CD8-positive, alpha-beta T cell (primary cell): ENCODE measurements at regions of chr2 and their contacts with region 1.

Region 1: GRCh38 chr2:30336978-30337841 is 105.9 kb downstream of the LBH start:
- DNase-seq: peak in 8 of 9 experiments; percentile 30 to 84 (median 60)
- ATAC-seq: peak; percentile 80
- H3K4me3 ChIP-seq: peak overlapping the region; percentile 31 to 43
- H3K4me3 Mint-ChIP-seq: peak overlapping the region; percentile 80
- H3K27ac ChIP-seq: peak overlapping the region; percentile 65 to 89
- H3K27ac Mint-ChIP-seq: peak overlapping the region; percentile 98
- H3K4me1 ChIP-seq: peaks cover 68% of the 10 kb centered on the region
- H3K4me1 Mint-ChIP-seq: peaks cover 82% of the 10 kb centered on the region
- H3K27me3 ChIP-seq: no peaks in the 10 kb centered on the region
- H3K27me3 Mint-ChIP-seq: no peaks in the 10 kb centered on the region
- CTCF ChIP-seq: no peak

Region 2: DNA sequence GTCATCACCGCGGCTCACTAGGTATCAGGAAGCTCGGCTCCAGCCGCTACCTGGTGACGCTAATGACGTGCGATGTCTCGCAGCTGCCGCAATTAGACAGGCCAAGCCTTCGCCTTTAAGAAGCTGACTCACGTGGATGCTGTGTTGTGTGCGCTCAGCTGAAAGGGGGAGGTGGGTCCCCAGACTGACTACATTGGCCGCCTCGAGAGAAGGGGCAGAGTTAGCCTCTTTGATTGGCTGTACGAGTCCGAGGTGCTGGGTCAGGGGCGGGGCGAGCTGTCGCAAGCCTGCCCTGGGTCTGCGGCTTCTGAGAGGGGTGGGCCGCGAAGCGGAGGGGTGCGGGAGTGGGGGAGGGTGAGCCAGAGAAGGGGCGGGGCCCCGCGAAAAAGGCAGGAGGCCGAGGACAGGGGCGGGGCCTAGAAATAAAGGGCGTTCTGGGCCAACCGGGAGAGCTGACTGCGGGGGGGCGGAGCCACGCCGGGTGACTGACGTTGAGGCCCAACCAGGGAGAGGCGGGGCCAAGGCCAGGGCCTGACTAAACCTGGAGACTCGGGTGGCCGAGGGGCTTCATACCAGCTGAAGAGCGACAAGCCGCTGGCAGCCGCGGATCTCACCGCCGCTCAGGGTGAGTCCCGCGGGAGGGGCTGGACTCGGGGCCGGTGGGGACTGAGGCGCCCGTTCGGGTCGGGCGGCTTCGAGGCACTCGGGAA is 190.6 kb before region 1 on chr2 and contains the start of gene YPEL5:
- CTCF ChIA-PET with region 1: no interaction called
- POLR2A ChIA-PET with region 1: interaction called, 8 read pairs
- intact Hi-C with region 1: loop called in 1 of 2 experiments (anchors 5 kb)
- DNase-seq: peak; percentile 99 to 100 (median 100)
- ATAC-seq: peak; percentile 82
- H3K4me3 ChIP-seq: peak within 1 kb of the TSS; percentile 75 to 76
- H3K4me3 Mint-ChIP-seq: peak within 1 kb of the TSS; percentile 89
- H3K27ac ChIP-seq: peak within 1 kb of the TSS; percentile 97 to 100
- H3K27ac Mint-ChIP-seq: peak within 1 kb of the TSS; percentile 100
- H3K4me1 ChIP-seq: peaks cover 50% of the 10 kb centered on the region
- H3K4me1 Mint-ChIP-seq: peaks cover 60% of the 10 kb centered on the region
- H3K27me3 ChIP-seq: no peaks in the 10 kb centered on the region
- H3K27me3 Mint-ChIP-seq: no peaks in the 10 kb centered on the region
- CTCF ChIP-seq: no peak
- total RNA-seq, gene YPEL5: 1,051 to 1,071 TPM

Region 3: GRCh38 chr2:30231212-30231995 is 105.8 kb before region 1 on chr2 and contains the start of gene LBH:
- CTCF ChIA-PET with region 1: interaction called, 52 read pairs
- POLR2A ChIA-PET with region 1: interaction called, 60 read pairs
- intact Hi-C with region 1: loop called in 1 of 2 experiments (anchors 2 kb)
- DNase-seq: peak; percentile 82 to 97 (median 89)
- ATAC-seq: peak; percentile 48
- H3K4me3 ChIP-seq: peak within 1 kb of the TSS; percentile 89 to 96
- H3K4me3 Mint-ChIP-seq: peak within 1 kb of the TSS; percentile 94
- H3K27ac ChIP-seq: peak within 1 kb of the TSS; percentile 92 to 99
- H3K27ac Mint-ChIP-seq: peak within 1 kb of the TSS; percentile 96
- H3K4me1 ChIP-seq: peaks cover 52% of the 10 kb centered on the region
- H3K4me1 Mint-ChIP-seq: peaks cover 64% of the 10 kb centered on the region
- H3K27me3 ChIP-seq: no peaks in the 10 kb centered on the region
- H3K27me3 Mint-ChIP-seq: no peaks in the 10 kb centered on the region
- CTCF ChIP-seq: no peak
- total RNA-seq, gene LBH: 127 to 133 TPM

Region 4: DNA sequence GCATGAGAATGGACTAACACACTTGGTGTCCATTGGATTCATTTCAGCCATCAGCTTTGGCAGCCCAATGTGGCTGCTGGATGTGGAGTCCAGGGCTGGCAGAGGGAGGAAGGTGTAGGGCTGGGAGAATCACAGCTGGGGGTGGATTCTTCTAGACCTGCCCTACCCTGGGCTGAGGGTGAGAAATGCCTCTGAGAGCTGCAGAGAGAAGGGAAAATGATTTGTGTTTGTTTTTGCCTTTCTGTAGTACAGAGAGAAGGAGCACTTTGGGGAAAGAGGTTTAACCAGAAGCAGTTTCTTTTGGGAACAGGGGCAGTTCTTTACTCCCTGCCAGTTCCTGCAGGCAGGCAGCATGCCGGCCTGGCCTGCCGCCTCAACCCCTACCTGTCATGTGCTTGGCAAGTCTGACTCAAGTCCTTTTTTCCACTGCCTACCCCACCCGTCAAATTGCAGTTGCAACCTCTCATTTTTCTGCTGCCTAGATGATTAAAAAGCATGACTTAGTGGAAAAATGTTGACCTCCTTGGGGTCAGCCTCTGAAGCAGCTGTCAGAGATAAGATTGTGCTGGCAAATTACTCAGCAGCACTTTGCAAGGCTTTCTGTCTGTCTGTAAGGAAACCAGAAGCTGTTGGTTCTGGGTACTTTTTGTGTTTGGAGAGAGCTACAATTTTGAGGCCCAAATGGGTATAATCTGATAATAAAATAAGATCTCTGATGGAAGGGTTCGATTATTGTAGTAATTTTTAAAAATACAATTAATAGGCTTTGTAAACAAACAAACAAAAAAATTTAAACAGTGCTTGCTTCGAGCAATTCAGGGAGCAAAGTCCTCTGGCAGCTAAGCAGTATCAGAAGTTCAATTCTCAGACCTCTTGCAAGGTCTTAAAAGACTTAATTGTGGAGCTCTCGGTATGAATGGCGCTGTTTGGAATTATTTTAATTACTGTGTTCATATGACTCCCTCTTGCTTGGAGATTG is 84.2 kb before region 1 on chr2:
- CTCF ChIA-PET with region 1: interaction called, 11 read pairs
- POLR2A ChIA-PET with region 1: interaction called, 6 read pairs
- intact Hi-C with region 1: no loop called
- DNase-seq: peak in 7 of 9 experiments; percentile 36 to 64 (median 55)
- ATAC-seq: peak; percentile 37
- H3K4me3 ChIP-seq: peak overlapping the region in 1 of 2 experiments; percentile 17
- H3K4me3 Mint-ChIP-seq: peak overlapping the region; percentile 46
- H3K27ac ChIP-seq: peak overlapping the region; percentile 28 to 68
- H3K27ac Mint-ChIP-seq: peak overlapping the region; percentile 98
- H3K4me1 ChIP-seq: peaks cover 97% of the 10 kb centered on the region
- H3K4me1 Mint-ChIP-seq: peaks cover 96% of the 10 kb centered on the region
- H3K27me3 ChIP-seq: no peaks in the 10 kb centered on the region
- H3K27me3 Mint-ChIP-seq: no peaks in the 10 kb centered on the region
- CTCF ChIP-seq: no peak

Region 5: GRCh38 chr2:30310955-30311354 is 26.3 kb before region 1 on chr2:
- CTCF ChIA-PET with region 1: interaction called, 3 read pairs
- POLR2A ChIA-PET with region 1: interaction called, 6 read pairs
- intact Hi-C with region 1: loop called in 1 of 2 experiments (anchors 2 kb)
- DNase-seq: peak in 1 of 9 experiments; percentile 30
- ATAC-seq: peak; percentile 25
- H3K4me3 ChIP-seq: no peak overlapping the region
- H3K4me3 Mint-ChIP-seq: peak overlapping the region; percentile 9
- H3K27ac ChIP-seq: no peak overlapping the region
- H3K27ac Mint-ChIP-seq: peak overlapping the region; percentile 67
- H3K4me1 ChIP-seq: peaks cover 35% of the 10 kb centered on the region
- H3K4me1 Mint-ChIP-seq: peaks cover 47% of the 10 kb centered on the region
- H3K27me3 ChIP-seq: no peaks in the 10 kb centered on the region
- H3K27me3 Mint-ChIP-seq: no peaks in the 10 kb centered on the region
- CTCF ChIP-seq: no peak

Region 6: DNA sequence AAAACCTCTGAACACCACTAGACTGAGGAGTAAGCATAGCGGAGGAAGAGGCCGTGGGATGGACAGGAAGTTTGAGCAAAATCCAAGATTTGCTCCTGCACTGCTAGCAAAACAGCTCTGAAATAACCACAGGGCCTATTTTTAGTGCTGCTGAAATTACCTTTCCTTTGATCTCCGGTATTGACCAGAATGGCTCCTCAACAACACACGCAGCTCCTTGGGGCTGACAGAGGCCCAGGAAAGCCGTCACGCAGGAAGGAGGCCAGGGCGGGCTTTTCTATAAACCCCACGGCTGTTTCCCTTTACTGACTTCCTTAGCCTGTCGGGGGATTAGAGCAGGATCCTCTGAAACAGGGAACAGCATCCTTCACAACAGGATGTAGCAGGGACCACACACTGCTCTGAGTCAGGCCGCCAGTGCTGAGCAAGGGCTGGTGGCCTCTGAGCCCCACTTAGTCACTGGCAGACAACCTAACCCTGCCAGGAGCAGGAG is 29.0 kb after region 1 on chr2:
- CTCF ChIA-PET with region 1: interaction called, 12 read pairs
- POLR2A ChIA-PET with region 1: interaction called, 7 read pairs
- intact Hi-C with region 1: loop called in 1 of 2 experiments (anchors 1 kb)
- DNase-seq: peak in 6 of 9 experiments; percentile 25 to 68 (median 37)
- ATAC-seq: peak; percentile 70
- H3K4me3 ChIP-seq: no peak overlapping the region
- H3K4me3 Mint-ChIP-seq: no peak overlapping the region
- H3K27ac ChIP-seq: no peak overlapping the region
- H3K27ac Mint-ChIP-seq: peak overlapping the region; percentile 19
- H3K4me1 ChIP-seq: peaks cover 33% of the 10 kb centered on the region
- H3K4me1 Mint-ChIP-seq: peaks cover 49% of the 10 kb centered on the region
- H3K27me3 ChIP-seq: no peaks in the 10 kb centered on the region
- H3K27me3 Mint-ChIP-seq: no peaks in the 10 kb centered on the region
- CTCF ChIP-seq: no peak

Region 7: DNA sequence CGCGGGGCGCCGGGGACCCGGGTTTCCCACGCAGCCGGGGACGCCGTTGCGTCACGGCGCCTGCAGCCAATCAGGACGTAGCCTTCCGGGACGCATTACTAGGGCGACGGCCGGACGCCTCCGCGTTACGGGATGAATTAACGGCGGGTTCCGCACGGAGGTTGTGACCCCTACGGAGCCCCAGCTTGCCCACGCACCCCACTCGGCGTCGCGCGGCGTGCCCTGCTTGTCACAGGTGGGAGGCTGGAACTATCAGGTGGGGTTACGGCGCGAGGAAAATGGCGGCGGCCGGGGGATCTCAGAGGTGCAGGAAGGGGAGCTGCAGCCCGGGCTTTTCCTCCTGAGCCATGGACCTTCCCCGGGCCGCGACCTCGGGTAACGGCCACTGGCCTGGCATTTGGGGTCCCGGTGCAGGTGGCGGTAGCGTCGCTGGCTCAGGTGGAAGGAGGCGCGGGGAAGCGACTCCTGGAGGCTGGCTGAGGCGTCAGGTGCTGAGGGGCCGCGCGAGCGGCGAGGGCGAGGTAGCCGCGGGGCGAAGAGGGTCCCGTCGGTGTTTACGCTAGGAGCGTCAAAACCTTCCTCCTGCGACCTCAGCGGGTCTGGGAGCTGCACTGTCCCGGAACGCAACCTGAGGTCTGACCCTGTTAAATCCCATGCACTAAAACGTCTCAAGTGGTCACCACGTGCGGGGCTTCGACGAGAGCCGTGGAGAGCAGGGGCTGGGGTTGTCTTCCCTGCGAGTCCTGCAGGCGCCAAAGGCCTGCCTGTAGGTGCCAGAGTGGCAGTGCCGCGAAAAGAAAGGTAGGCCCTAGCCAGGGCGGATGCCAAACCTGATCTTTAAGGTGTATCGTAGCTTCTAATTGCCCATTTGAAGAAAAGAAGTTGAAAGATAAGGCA is 110.2 kb after region 1 on chr2 and contains the start of gene LCLAT1:
- CTCF ChIA-PET with region 1: interaction called, 6 read pairs
- POLR2A ChIA-PET with region 1: interaction called, 6 read pairs
- intact Hi-C with region 1: loop called (anchors 2 to 10 kb)
- DNase-seq: peak; percentile 66 to 95 (median 84)
- ATAC-seq: peak; percentile 88
- H3K4me3 ChIP-seq: peak within 1 kb of the TSS; percentile 87 to 99
- H3K4me3 Mint-ChIP-seq: peak within 1 kb of the TSS; percentile 94
- H3K27ac ChIP-seq: peak within 1 kb of the TSS; percentile 92 to 95
- H3K27ac Mint-ChIP-seq: peak within 1 kb of the TSS; percentile 98
- H3K4me1 ChIP-seq: peaks cover 20% of the 10 kb centered on the region
- H3K4me1 Mint-ChIP-seq: peaks cover 45% of the 10 kb centered on the region
- H3K27me3 ChIP-seq: no peaks in the 10 kb centered on the region
- H3K27me3 Mint-ChIP-seq: no peaks in the 10 kb centered on the region
- CTCF ChIP-seq: no peak
- total RNA-seq, gene LCLAT1: 11.3 to 12.1 TPM

Region 8: GRCh38 chr2:30636311-30636710 is 299.1 kb after region 1 on chr2:
- CTCF ChIA-PET with region 1: no interaction called
- POLR2A ChIA-PET with region 1: no interaction called
- intact Hi-C with region 1: no loop called
- DNase-seq: no peak
- ATAC-seq: no peak
- H3K4me3 ChIP-seq: no peak overlapping the region
- H3K4me3 Mint-ChIP-seq: no peak overlapping the region
- H3K27ac ChIP-seq: no peak overlapping the region
- H3K27ac Mint-ChIP-seq: peak overlapping the region; percentile 5
- H3K4me1 ChIP-seq: peaks cover 2% of the 10 kb centered on the region
- H3K4me1 Mint-ChIP-seq: peaks cover 2% of the 10 kb centered on the region
- H3K27me3 ChIP-seq: no peaks in the 10 kb centered on the region
- H3K27me3 Mint-ChIP-seq: no peaks in the 10 kb centered on the region
- CTCF ChIP-seq: no peak